Ascending aorta (tissue), 2 donors: ENCODE measurements at regions of chr2 and their contacts with region 1.

Region 1: DNA sequence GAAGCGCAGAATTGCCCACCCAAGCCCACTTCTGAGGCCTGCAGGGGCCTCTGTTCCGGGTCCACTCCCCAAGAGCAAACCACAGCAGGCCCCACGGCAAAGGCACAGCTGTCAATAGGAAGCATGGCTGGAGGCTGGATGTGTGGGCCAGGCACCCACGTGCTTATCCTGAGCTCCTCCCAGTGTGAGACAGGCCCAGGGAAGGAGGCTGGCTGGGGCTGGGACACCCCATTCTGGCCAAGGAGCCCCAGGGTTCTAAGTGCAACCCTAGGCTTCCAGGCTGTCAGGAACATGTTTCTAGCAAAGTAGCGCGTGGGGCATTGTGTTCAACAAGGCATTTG is 6.0 kb upstream of the RAB17 start:
- DNase-seq: no peak
- H3K4me3 ChIP-seq: no peak overlapping the region
- H3K27ac ChIP-seq: peak overlapping the region; percentile 90
- H3K4me1 ChIP-seq: peaks cover 25 to 50% of the 10 kb centered on the region in 2 donors
- H3K27me3 ChIP-seq: no peaks in the 10 kb centered on the region
- CTCF ChIP-seq: no peak

Region 2: GRCh38 chr2:237674731-237675276 is 78.3 kb after region 1 on chr2:
- intact Hi-C with region 1: loop called (anchors 5 kb)
- DNase-seq: peak; percentile 83 to 95
- H3K4me3 ChIP-seq: peak overlapping the region; percentile 32 to 57
- H3K27ac ChIP-seq: peak overlapping the region; percentile 83 to 86
- H3K4me1 ChIP-seq: peaks cover 14 to 59% of the 10 kb centered on the region in 2 donors
- H3K27me3 ChIP-seq: no peaks in the 10 kb centered on the region
- CTCF ChIP-seq: peak in 1 of 3 experiments; percentile 26